WTC11 (cell line): ENCODE measurements at regions of chr9 and their contacts with region 1.

Region 1: GRCh38 chr9:18442629-18443491 is 31.1 kb upstream of the ADAMTSL1 start:
- DNase-seq: peak; percentile 78
- ATAC-seq: peak; percentile 87
- H3K4me3 Mint-ChIP-seq: no peak overlapping the region
- H3K27ac Mint-ChIP-seq: no peak overlapping the region
- H3K4me1 Mint-ChIP-seq: peaks cover 12% of the 10 kb centered on the region
- H3K27me3 Mint-ChIP-seq: peaks cover 13% of the 10 kb centered on the region
- CTCF ChIP-seq: peak; percentile 81

Region 2: GRCh38 chr9:18261181-18261580 is 181.7 kb before region 1 on chr9:
- CTCF ChIA-PET with region 1: interaction called, 36 read pairs
- POLR2A ChIA-PET with region 1: no interaction called
- DNase-seq: no peak
- ATAC-seq: no peak
- H3K4me3 Mint-ChIP-seq: no peak overlapping the region
- H3K27ac Mint-ChIP-seq: no peak overlapping the region
- H3K4me1 Mint-ChIP-seq: peaks cover 12% of the 10 kb centered on the region
- H3K27me3 Mint-ChIP-seq: no peaks in the 10 kb centered on the region
- CTCF ChIP-seq: no peak

Region 3: GRCh38 chr9:18422296-18423036 is 20.4 kb before region 1 on chr9:
- CTCF ChIA-PET with region 1: interaction called, 16 read pairs
- POLR2A ChIA-PET with region 1: no interaction called
- DNase-seq: no peak
- ATAC-seq: no peak
- H3K4me3 Mint-ChIP-seq: no peak overlapping the region
- H3K27ac Mint-ChIP-seq: no peak overlapping the region
- H3K4me1 Mint-ChIP-seq: peaks cover 13% of the 10 kb centered on the region
- H3K27me3 Mint-ChIP-seq: no peaks in the 10 kb centered on the region
- CTCF ChIP-seq: no peak